Sciatic nerve (tissue), 2 donors: ENCODE measurements at regions of chr7 and their contacts with region 1.

Region 1: GRCh38 chr7:151637781-151638261 is 118.1 kb upstream of the RHEB start:
- DNase-seq: no peak
- ATAC-seq: no peak

Region 2: GRCh38 chr7:151657173-151657572 is 19.4 kb after region 1 on chr7:
- intact Hi-C with region 1: loop called (anchors 2 kb)
- DNase-seq: no peak
- ATAC-seq: no peak